Caco-2 (cell line): ENCODE measurements at regions of chr17 and their contacts with region 1.

Region 1: GRCh38 chr17:17681187-17681848 is at the start of gene RAI1:
- DNase-seq: peak; percentile 72 to 88
- H3K4me3 ChIP-seq: peak within 1 kb of the TSS; percentile 96
- H3K4me3 Mint-ChIP-seq: peak within 1 kb of the TSS; percentile 90
- H3K27ac Mint-ChIP-seq: peak within 1 kb of the TSS; percentile 96
- H3K4me1 ChIP-seq: peaks cover 24% of the 10 kb centered on the region
- H3K4me1 Mint-ChIP-seq: peaks cover 27% of the 10 kb centered on the region
- H3K27me3 ChIP-seq: no peaks in the 10 kb centered on the region
- H3K27me3 Mint-ChIP-seq: no peaks in the 10 kb centered on the region
- CTCF ChIP-seq: peak; percentile 30 to 83
- total RNA-seq, gene RAI1: 44.3 and 46.7 TPM in 2 replicates

Region 2: DNA sequence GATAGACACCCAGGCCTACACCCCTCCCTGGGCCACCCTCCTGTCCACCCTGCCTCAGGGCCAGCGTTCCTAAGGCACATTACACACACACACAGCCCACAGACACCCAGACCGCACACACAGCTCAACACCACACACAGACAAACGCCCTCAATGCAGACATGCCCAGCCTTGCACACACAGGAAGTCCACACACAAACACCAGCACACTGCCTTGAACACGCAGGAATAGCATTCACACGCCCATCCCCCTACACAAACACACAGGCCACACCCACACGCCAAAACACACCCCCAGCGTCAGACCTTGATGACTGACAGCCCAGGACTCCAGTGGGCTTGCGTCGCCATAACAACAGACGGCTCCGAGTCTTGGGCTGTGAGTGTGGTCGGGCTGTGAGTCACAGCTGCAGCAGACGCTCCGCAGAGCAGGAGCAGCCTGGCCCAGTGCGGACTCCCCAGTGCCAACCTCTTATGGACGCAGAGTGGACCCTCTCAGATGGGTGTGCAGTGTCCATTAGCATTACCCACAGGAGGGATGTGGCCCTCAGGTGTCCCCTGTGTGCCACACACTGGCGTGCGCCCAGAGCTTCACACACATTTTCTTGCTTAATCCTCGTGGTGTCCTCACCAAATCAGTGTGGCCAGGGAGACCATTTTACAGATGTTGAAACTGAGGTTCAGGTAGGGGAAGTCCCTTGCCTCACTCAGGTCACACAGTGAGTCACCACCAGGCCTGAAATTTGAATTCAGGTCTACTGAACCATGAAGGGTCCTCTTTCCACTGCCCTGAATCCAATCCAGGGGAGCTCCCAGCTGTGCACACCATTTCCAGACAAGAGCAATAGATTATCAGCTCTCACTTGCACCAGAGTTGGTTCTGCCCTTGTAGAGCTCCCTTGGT is 17.9 kb before region 1 on chr17:
- CTCF ChIA-PET with region 1: no interaction called
- POLR2A ChIA-PET with region 1: no interaction called
- intact Hi-C with region 1: no loop called
- DNase-seq: peak; percentile 67 to 77
- H3K4me3 ChIP-seq: no peak overlapping the region
- H3K4me3 Mint-ChIP-seq: no peak overlapping the region
- H3K27ac Mint-ChIP-seq: no peak overlapping the region
- H3K4me1 ChIP-seq: peaks cover 5% of the 10 kb centered on the region; the same call in 1 of the 2 replicates
- H3K4me1 Mint-ChIP-seq: peaks cover 10% of the 10 kb centered on the region
- H3K27me3 ChIP-seq: no peaks in the 10 kb centered on the region
- H3K27me3 Mint-ChIP-seq: peaks cover 2% of the 10 kb centered on the region
- CTCF ChIP-seq: no peak

Region 3: DNA sequence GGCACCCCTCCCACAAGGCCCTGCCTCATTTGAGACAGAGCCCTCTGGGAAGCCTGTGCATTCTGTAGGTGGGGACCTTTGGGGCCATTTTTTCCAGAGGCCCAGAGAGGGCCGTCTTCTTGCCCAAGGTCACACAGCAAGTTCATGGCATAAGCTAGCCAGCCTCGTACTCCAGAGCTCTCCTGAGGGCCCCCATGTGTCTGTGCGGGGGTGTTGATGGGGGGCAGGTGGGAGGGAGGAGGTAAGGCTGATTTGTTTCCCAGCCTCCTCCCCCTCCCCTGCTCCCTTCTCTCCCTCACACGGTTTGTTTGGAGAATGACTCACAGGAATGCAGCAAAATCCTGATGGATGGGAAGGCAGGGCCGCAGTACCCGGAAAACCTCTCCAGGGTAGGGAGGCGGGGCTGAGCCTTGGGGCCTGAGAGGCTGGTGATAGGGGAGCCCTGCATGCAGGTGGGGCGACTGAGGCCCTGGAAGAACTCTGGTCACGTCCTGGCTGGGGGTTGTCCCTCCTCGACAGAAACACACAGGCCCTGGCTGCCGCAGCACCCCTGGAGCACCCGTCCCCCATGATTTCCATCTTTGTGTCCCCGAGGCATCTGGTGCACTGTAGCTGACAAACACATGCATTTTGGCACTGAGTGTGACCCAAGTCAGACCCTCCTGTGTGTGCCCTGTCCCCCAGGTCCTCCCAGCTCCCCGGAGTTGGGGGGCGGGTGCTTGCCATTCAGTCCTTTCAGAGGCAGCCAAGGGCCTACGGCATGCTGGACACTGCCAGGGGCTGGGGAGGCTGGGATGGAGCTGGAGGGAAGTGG is 29.6 kb after region 1 on chr17:
- CTCF ChIA-PET with region 1: no interaction called
- POLR2A ChIA-PET with region 1: interaction called, 4 read pairs
- intact Hi-C with region 1: loop called (anchors 2 kb)
- DNase-seq: peak; percentile 95 to 97
- H3K4me3 ChIP-seq: peak overlapping the region; percentile 2; the same call in 1 of the 2 replicates
- H3K4me3 Mint-ChIP-seq: peak overlapping the region; percentile 54
- H3K27ac Mint-ChIP-seq: peak overlapping the region; percentile 84
- H3K4me1 ChIP-seq: peaks cover 65% of the 10 kb centered on the region
- H3K4me1 Mint-ChIP-seq: peaks cover 50% of the 10 kb centered on the region
- H3K27me3 ChIP-seq: no peaks in the 10 kb centered on the region
- H3K27me3 Mint-ChIP-seq: no peaks in the 10 kb centered on the region
- CTCF ChIP-seq: peak in 1 of 2 experiments; percentile 10

Region 4: DNA sequence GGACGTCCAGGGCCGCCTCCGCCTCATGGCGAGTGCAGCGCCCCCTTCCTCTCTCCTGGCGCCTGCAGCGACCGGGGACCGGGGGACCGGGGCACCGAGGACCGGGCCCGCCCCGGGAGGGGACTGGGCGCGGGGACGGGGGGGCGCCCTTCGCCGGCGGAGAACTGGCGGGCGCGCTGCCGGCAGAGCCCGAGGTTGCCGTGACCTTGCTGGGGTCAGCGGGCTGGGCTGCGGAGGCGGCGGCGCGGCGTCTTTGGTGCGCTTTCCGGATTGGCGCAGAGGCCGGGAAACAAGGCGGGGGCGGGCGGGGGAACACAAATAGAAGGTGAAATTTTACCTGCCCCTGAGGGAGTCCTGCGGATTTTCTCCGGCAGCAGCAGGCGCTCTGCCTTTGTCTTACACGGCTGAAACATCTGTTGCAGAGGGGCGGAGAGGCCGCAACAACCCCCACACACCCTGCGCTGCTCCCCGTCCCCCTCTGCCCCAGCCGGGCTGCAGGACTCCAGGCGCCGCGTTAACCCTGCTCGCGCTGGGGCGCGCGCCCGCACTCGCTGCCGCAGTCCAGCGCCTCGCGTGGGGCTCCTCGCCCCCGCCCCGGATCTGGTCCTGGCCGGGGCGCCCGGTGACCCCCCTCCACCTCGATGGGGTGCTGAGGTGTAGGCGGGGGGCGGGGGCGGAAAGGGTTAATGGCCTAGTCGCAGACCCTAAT is 102.0 kb after region 1 on chr17:
- CTCF ChIA-PET with region 1: no interaction called
- POLR2A ChIA-PET with region 1: no interaction called
- intact Hi-C with region 1: loop called (anchors 5 kb)
- DNase-seq: peak; percentile 65 to 78
- H3K4me3 ChIP-seq: peak overlapping the region; percentile 57
- H3K4me3 Mint-ChIP-seq: peak overlapping the region; percentile 86
- H3K27ac Mint-ChIP-seq: no peak overlapping the region
- H3K4me1 ChIP-seq: peaks cover 31% of the 10 kb centered on the region
- H3K4me1 Mint-ChIP-seq: peaks cover 26% of the 10 kb centered on the region
- H3K27me3 ChIP-seq: no peaks in the 10 kb centered on the region
- H3K27me3 Mint-ChIP-seq: no peaks in the 10 kb centered on the region
- CTCF ChIP-seq: peak in 1 of 2 experiments; percentile 22

Region 5: GRCh38 chr17:17836250-17836817 is 155.0 kb after region 1 on chr17:
- CTCF ChIA-PET with region 1: no interaction called
- POLR2A ChIA-PET with region 1: interaction called, 5 read pairs
- intact Hi-C with region 1: loop called (anchors 5 kb)
- DNase-seq: peak; percentile 98 to 99
- H3K4me3 ChIP-seq: peak overlapping the region; percentile 98
- H3K4me3 Mint-ChIP-seq: peak overlapping the region; percentile 82
- H3K27ac Mint-ChIP-seq: peak overlapping the region; percentile 98
- H3K4me1 ChIP-seq: peaks cover 46% of the 10 kb centered on the region
- H3K4me1 Mint-ChIP-seq: peaks cover 38% of the 10 kb centered on the region
- H3K27me3 ChIP-seq: no peaks in the 10 kb centered on the region
- H3K27me3 Mint-ChIP-seq: no peaks in the 10 kb centered on the region
- CTCF ChIP-seq: no peak

Region 6: GRCh38 chr17:17859909-17860765 is 178.8 kb after region 1 on chr17:
- CTCF ChIA-PET with region 1: no interaction called
- POLR2A ChIA-PET with region 1: no interaction called
- intact Hi-C with region 1: loop called (anchors 1 kb)
- DNase-seq: peak; percentile 70 to 78
- H3K4me3 ChIP-seq: no peak overlapping the region
- H3K4me3 Mint-ChIP-seq: no peak overlapping the region
- H3K27ac Mint-ChIP-seq: no peak overlapping the region
- H3K4me1 ChIP-seq: peaks cover 3% of the 10 kb centered on the region; the same call in 1 of the 2 replicates
- H3K4me1 Mint-ChIP-seq: peaks cover 6% of the 10 kb centered on the region
- H3K27me3 ChIP-seq: no peaks in the 10 kb centered on the region
- H3K27me3 Mint-ChIP-seq: no peaks in the 10 kb centered on the region
- CTCF ChIP-seq: peak; percentile 98